ENCODE measurements at regions of chr4 and their contacts with region 1.

Region 1: GRCh38 chr4:145557720-145558119 is 61.5 kb upstream of the MMAA start:
- DNase-seq: peak; percentile 60
- ATAC-seq: no peak
- H3K4me3 ChIP-seq: no peak overlapping the region
- H3K4me3 Mint-ChIP-seq: no peak overlapping the region
- H3K27ac ChIP-seq: no peak overlapping the region
- H3K27ac Mint-ChIP-seq: no peak overlapping the region
- H3K4me1 ChIP-seq: no peaks in the 10 kb centered on the region
- H3K4me1 Mint-ChIP-seq: no peaks in the 10 kb centered on the region
- H3K27me3 ChIP-seq: peaks cover 0 to 4% (median 1%) of the 10 kb centered on the region in 4 experiments
- H3K27me3 Mint-ChIP-seq: peaks cover 8% of the 10 kb centered on the region
- CTCF ChIP-seq: peak; percentile 86

Region 2: DNA sequence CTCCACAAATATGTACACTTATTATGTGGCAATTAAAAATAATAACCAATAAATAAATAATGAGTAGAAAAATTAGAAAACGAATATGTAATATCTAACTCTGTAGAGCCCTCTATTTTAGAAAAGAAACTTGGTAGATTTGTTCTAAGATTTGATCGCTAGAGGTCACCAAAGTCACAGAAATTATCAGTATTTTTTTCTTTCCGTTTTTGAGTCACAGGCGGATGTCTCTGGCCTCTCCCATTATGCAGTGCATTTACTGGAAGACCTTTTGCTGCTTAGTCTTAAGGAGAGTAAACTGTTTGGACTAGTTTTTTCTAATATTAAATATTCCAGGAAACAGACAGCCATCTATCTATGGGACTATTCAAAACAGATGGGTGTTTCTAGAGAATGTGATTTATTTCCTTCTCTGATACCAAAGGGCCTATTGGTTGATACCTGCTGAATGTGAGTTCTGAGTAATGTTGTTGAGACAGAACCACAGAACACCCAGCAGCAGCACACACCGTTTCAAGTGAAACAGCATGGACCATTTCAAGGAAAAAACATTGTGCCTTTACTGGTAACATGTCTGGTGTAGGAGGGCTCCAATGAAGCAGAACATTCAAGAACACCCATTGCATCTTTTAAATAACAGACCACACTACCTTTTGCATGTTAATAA is 1383.2 kb before region 1 on chr4:
- CTCF ChIA-PET with region 1: interaction called, 3 read pairs
- POLR2A ChIA-PET with region 1: no interaction called
- intact Hi-C with region 1: loop called (anchors 2 kb)
- DNase-seq: peak; percentile 58
- ATAC-seq: peak; percentile 56
- H3K4me3 ChIP-seq: no peak overlapping the region
- H3K4me3 Mint-ChIP-seq: no peak overlapping the region
- H3K27ac ChIP-seq: no peak overlapping the region
- H3K27ac Mint-ChIP-seq: no peak overlapping the region
- H3K4me1 ChIP-seq: peaks cover 0 to 4% of the 10 kb centered on the region in 2 donors
- H3K4me1 Mint-ChIP-seq: peaks cover 6% of the 10 kb centered on the region
- H3K27me3 ChIP-seq: peaks cover 0 to 5% (median 0%) of the 10 kb centered on the region in 4 experiments
- H3K27me3 Mint-ChIP-seq: peaks cover 5% of the 10 kb centered on the region
- CTCF ChIP-seq: peak; percentile 78

Region 3: DNA sequence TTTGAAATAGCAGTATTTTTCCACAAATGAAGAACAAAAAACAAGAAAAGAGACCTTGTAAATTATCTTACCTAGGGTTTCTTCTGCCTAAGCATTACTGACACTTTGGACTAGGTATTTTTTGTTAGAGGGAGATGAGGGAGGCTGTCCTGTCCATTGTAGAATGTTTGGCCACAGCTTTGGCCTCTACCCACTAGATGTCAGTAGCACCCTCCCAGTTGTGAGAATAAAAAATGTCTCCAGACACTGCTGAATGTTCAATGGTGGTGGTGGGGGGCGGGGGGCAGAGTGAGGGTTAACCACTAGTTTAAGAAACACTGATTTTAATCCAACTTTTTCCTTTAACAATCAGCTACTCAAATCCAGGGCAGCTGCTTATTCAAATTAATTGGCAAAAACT is 403.1 kb before region 1 on chr4:
- CTCF ChIA-PET with region 1: interaction called, 5 read pairs
- POLR2A ChIA-PET with region 1: no interaction called
- intact Hi-C with region 1: loop called (anchors 1 kb)
- DNase-seq: peak; percentile 49
- ATAC-seq: peak; percentile 47
- H3K4me3 ChIP-seq: no peak overlapping the region
- H3K4me3 Mint-ChIP-seq: no peak overlapping the region
- H3K27ac ChIP-seq: no peak overlapping the region
- H3K27ac Mint-ChIP-seq: no peak overlapping the region
- H3K4me1 ChIP-seq: peaks cover 0 to 3% of the 10 kb centered on the region in 2 donors
- H3K4me1 Mint-ChIP-seq: peaks cover 5% of the 10 kb centered on the region
- H3K27me3 ChIP-seq: no peaks in the 10 kb centered on the region
- H3K27me3 Mint-ChIP-seq: no peaks in the 10 kb centered on the region
- CTCF ChIP-seq: peak; percentile 53

Region 4: GRCh38 chr4:145234091-145234706 is 323.5 kb before region 1 on chr4:
- CTCF ChIA-PET with region 1: interaction called, 10 read pairs
- POLR2A ChIA-PET with region 1: no interaction called
- intact Hi-C with region 1: loop called (anchors 2 kb)
- DNase-seq: peak; percentile 59
- ATAC-seq: peak; percentile 53
- H3K4me3 ChIP-seq: no peak overlapping the region
- H3K4me3 Mint-ChIP-seq: no peak overlapping the region
- H3K27ac ChIP-seq: no peak overlapping the region
- H3K27ac Mint-ChIP-seq: no peak overlapping the region
- H3K4me1 ChIP-seq: no peaks in the 10 kb centered on the region
- H3K4me1 Mint-ChIP-seq: no peaks in the 10 kb centered on the region
- H3K27me3 ChIP-seq: no peaks in the 10 kb centered on the region
- H3K27me3 Mint-ChIP-seq: peaks cover 8% of the 10 kb centered on the region
- CTCF ChIP-seq: peak; percentile 73

Measured in B cell (primary cell).